ENCODE measurements at regions of chr17 and their contacts with region 1.

Region 1: GRCh38 chr17:57995076-57995956 is 7.3 kb upstream of the VEZF1 start:
- DNase-seq: peak; percentile 76
- ATAC-seq: peak; percentile 89
- H3K4me3 Mint-ChIP-seq: no peak overlapping the region
- H3K27ac Mint-ChIP-seq: peak overlapping the region; percentile 40
- H3K4me1 Mint-ChIP-seq: peaks cover 72% of the 10 kb centered on the region
- H3K27me3 Mint-ChIP-seq: no peaks in the 10 kb centered on the region
- CTCF ChIP-seq: peak; percentile 73

Region 2: DNA sequence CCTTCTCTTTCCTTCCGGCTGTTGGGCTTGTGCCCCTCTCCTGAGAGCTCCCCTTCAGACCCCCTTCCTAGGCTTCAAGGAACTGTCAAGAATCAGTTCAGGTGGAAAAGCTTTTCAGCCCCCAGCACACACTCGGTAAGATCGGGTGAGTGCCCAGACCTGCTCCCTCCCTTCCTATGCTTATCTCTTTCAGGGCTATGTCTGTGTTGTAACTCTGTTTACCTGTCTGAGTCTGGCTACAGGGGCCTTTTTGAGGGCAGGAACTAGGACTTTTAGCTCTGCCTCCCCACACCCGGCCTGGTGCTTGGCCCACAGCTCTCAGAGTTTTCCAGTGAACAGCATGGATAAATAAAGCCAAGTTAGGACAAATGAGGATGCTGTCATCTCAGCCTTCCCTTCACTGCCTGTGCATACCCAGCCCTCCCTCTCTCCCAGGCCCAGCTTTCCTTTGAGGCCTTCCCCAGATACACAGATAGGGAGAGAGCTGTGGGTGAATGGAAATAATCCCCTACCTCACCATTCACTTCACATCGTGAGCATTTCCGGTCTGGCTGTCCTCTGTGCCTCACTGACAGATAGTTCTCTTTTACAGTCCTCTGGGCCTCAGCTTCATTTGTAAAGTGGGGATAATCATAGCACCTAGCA is 139.8 kb before region 1 on chr17:
- CTCF ChIA-PET with region 1: interaction called, 177 read pairs
- POLR2A ChIA-PET with region 1: interaction called, 15 read pairs
- intact Hi-C with region 1: loop called (anchors 5 kb)
- DNase-seq: no peak
- ATAC-seq: no peak
- H3K4me3 Mint-ChIP-seq: no peak overlapping the region
- H3K27ac Mint-ChIP-seq: no peak overlapping the region
- H3K4me1 Mint-ChIP-seq: peaks cover 13% of the 10 kb centered on the region
- H3K27me3 Mint-ChIP-seq: peaks cover 14% of the 10 kb centered on the region
- CTCF ChIP-seq: no peak

Region 3: DNA sequence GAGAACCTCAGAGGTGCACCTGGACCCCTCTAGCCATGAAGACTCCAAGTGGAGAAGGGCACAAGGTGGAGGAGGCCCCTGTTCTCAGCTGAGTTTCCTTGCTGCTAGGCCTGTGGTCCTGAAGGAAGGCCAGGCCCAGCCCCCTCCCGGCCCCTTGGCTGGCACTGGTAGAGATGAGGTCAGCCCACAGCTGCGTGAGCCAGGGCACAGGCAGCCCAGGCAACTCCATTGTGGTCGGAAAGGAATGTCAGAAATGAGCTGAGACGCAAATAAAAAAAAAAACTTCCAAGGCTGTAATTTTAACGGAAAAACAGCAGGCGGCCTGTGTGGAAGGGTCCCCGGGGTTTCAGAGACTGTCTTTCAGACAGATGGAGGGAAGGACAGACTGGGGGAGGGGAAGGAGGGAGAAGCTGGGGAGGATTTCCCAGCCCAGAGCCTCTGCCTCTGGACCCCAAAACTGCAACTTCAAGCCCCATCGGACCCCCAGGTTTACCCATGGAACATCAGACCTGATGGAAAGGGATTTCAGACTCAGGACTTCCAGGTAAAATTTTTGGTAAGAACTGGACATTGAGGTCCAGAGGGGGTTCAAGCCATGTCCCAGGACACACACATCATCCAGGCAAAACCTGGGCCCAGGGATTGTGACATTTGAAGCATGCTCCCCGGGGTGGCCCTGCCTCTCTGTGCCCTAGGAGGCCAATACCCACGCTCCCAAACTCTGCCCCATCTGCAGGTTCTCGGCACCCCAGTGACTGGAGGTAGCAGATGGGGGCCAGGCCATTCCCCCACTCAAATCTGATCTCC is 119.8 kb before region 1 on chr17:
- CTCF ChIA-PET with region 1: interaction called, 7 read pairs
- POLR2A ChIA-PET with region 1: interaction called, 18 read pairs
- intact Hi-C with region 1: no loop called
- DNase-seq: no peak
- ATAC-seq: no peak
- H3K4me3 Mint-ChIP-seq: no peak overlapping the region
- H3K27ac Mint-ChIP-seq: no peak overlapping the region
- H3K4me1 Mint-ChIP-seq: peaks cover 34% of the 10 kb centered on the region
- H3K27me3 Mint-ChIP-seq: peaks cover 23% of the 10 kb centered on the region
- CTCF ChIP-seq: no peak

Region 4: GRCh38 chr17:57946798-57947358 is 48.4 kb before region 1 on chr17:
- CTCF ChIA-PET with region 1: interaction called, 11 read pairs
- POLR2A ChIA-PET with region 1: interaction called, 4 read pairs
- intact Hi-C with region 1: no loop called
- DNase-seq: peak; percentile 50
- ATAC-seq: peak; percentile 83
- H3K4me3 Mint-ChIP-seq: peak overlapping the region; percentile 42
- H3K27ac Mint-ChIP-seq: no peak overlapping the region
- H3K4me1 Mint-ChIP-seq: peaks cover 32% of the 10 kb centered on the region
- H3K27me3 Mint-ChIP-seq: peaks cover 16% of the 10 kb centered on the region
- CTCF ChIP-seq: no peak

Region 5: DNA sequence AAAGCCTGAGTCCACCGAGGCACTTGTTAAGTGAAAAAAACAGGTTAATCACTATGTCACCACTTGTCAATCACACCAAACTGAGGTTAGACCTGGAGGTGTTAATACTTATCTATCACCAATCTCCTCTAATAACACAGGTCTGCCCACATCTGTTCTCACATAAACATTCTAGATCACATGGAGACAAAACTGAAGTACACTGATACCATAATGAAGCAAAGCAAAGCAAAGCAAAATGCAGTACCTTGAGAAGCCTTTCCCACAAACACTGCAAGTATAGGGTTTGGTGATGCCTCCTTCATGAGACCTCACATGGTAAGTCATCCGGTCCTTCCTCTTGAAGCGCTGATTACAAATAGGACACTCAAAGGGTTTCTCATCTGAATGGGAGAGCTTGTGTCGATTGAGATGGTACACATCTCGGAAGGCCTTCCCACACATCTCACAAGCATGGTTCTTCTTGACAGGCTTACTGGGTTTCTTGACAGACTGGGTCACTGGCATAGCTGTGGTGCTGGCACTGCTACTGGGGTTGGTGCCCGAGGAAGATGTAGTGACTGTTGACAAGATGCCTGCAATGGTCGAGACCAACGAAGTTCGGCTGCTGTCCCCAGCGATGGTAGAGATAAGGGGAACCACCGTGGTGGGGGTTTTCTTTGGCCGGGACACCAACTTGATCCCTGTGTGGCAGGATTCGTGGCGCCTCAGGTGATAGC is 12.7 kb before region 1 on chr17:
- CTCF ChIA-PET with region 1: interaction called, 32 read pairs
- POLR2A ChIA-PET with region 1: interaction called, 16 read pairs
- intact Hi-C with region 1: no loop called
- DNase-seq: no peak
- ATAC-seq: peak; percentile 6
- H3K4me3 Mint-ChIP-seq: no peak overlapping the region
- H3K27ac Mint-ChIP-seq: peak overlapping the region; percentile 14
- H3K4me1 Mint-ChIP-seq: peaks cover 60% of the 10 kb centered on the region
- H3K27me3 Mint-ChIP-seq: no peaks in the 10 kb centered on the region
- CTCF ChIP-seq: no peak

Region 6: GRCh38 chr17:58112970-58113631 is 117.8 kb after region 1 on chr17:
- CTCF ChIA-PET with region 1: interaction called, 25 read pairs
- POLR2A ChIA-PET with region 1: interaction called, 4 read pairs
- intact Hi-C with region 1: loop called (anchors 10 kb)
- DNase-seq: peak; percentile 92
- ATAC-seq: peak; percentile 99
- H3K4me3 Mint-ChIP-seq: no peak overlapping the region
- H3K27ac Mint-ChIP-seq: no peak overlapping the region
- H3K4me1 Mint-ChIP-seq: no peaks in the 10 kb centered on the region
- H3K27me3 Mint-ChIP-seq: peaks cover 3% of the 10 kb centered on the region
- CTCF ChIP-seq: peak; percentile 89